Mucosa of descending colon (tissue), 3 donors: ENCODE measurements at regions of chr21 and their contacts with region 1.

Region 1: GRCh38 chr21:42117229-42117966 is 46.3 kb downstream of the UMODL1 start:
- DNase-seq: peak in 2 of 3 donors; percentile 85 to 92
- ATAC-seq: peak; percentile 88
- H3K4me3 ChIP-seq: no peak overlapping the region
- H3K4me1 ChIP-seq: peaks cover 6% of the 10 kb centered on the region
- CTCF ChIP-seq: peak; percentile 91

Region 2: GRCh38 chr21:41816220-41817165 is 300.9 kb before region 1 on chr21:
- intact Hi-C with region 1: loop called (anchors 5 kb)
- DNase-seq: peak in 2 of 3 donors; percentile 71 to 77
- ATAC-seq: peak; percentile 86
- H3K4me3 ChIP-seq: no peak overlapping the region
- H3K4me1 ChIP-seq: peaks cover 2% of the 10 kb centered on the region
- CTCF ChIP-seq: peak; percentile 70

Region 3: GRCh38 chr21:41907536-41908258 is 209.7 kb before region 1 on chr21:
- intact Hi-C with region 1: no loop called
- DNase-seq: no peak
- ATAC-seq: no peak
- H3K4me3 ChIP-seq: no peak overlapping the region
- H3K4me1 ChIP-seq: no peaks in the 10 kb centered on the region
- CTCF ChIP-seq: no peak

Region 4: DNA sequence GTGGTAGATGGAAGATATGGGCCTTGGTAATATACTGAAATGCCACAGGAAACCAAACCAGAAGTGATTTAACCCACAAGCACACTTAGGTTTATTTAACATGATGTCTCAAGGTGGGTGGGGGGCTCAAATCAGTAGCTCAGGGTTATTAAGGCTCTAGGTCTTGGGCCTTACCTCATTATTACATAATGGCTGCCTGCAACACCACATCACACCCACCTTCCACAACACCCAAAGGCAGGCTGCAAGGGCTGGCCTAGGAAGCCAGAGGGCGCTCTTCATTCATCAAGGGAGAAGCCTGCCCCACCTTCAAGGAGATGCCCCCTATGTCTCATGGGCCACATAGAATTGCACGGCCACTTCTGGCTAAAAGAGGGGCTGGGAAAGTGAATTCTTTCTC is 242.9 kb after region 1 on chr21:
- intact Hi-C with region 1: no loop called
- DNase-seq: peak in 1 of 3 donors; percentile 16
- ATAC-seq: no peak
- H3K4me3 ChIP-seq: no peak overlapping the region
- H3K4me1 ChIP-seq: no peaks in the 10 kb centered on the region
- CTCF ChIP-seq: no peak